Right ventricle myocardium superior (tissue), 1 donor: ENCODE measurements at regions of chr2 and their contacts with region 1.

Region 1: DNA sequence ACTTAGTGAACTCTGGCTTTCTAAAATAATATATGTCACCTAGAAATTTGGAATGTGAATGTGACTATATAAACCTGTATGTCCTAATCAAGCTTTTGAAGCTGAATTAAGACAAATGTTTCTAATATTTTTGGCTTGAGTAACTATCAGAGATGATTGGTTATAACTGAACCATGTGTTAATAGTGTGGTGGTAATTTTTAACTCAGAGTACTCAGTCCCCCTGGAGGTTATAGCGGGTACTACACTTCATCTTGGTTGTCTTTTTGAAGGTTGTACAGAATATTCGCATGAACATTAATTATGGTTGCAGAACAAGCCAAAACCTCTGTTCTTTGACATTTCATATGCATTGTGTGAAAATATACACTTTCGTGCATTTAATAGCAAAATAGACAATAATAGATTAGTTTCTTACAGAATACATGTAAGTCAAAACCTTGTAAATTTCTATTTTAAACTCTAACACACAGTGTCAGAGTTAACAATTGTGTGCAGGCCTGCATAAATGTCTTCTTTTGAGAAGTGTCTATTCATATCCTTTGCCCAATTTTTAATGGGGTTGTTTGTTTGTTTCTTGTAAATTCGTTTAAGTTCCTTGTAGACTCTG is 86.0 kb downstream of the OSBPL6 start:
- DNase-seq: no peak
- ATAC-seq: peak; percentile 68

Region 2: GRCh38 chr2:177900082-177900481 is 380.3 kb before region 1 on chr2:
- intact Hi-C with region 1: no loop called
- DNase-seq: no peak
- ATAC-seq: no peak

Region 3: GRCh38 chr2:178128836-178129630 is 151.3 kb before region 1 on chr2:
- intact Hi-C with region 1: loop called (anchors 5 kb)
- DNase-seq: no peak
- ATAC-seq: no peak

Region 4: DNA sequence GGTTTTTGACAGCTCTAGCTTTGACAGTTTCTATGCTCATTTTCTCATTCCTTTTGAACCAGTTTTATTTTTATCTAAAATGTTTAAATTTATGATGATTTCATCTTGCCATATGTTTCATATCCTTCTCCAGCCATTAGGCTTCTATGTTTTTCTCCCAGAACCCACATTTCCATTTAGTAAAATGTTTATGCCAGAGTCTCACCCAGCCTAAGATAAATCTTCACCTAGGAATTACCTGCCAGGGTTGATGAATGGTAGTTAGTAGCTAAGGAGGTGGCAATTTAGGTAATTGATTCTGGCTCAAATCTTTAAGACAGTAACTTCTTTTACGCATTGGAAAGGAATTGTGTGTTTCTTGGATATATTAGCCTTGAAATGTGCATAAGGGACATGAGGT is 87.0 kb after region 1 on chr2:
- intact Hi-C with region 1: no loop called
- DNase-seq: no peak
- ATAC-seq: no peak